Ovary (tissue), 10 donors: ENCODE measurements at regions of chr7 and their contacts with region 1.

Region 1: GRCh38 chr7:150806863-150807262 is 6.3 kb downstream of the TMEM176A start:
- DNase-seq: no peak
- H3K4me3 ChIP-seq: no peak overlapping the region
- H3K27ac ChIP-seq: no peak overlapping the region
- H3K4me1 ChIP-seq: no peaks in the 10 kb centered on the region
- H3K27me3 ChIP-seq: no peaks in the 10 kb centered on the region
- CTCF ChIP-seq: no peak
- EP300 ChIP-seq: no peak
- POLR2A ChIP-seq: no peak

Region 2: GRCh38 chr7:150842036-150842435 is 35.2 kb after region 1 on chr7:
- intact Hi-C with region 1: loop called in 1 of 4 experiments (anchors 1 kb)
- DNase-seq: no peak
- H3K4me3 ChIP-seq: no peak overlapping the region
- H3K27ac ChIP-seq: no peak overlapping the region
- H3K4me1 ChIP-seq: no peaks in the 10 kb centered on the region
- H3K27me3 ChIP-seq: no peaks in the 10 kb centered on the region
- CTCF ChIP-seq: no peak
- EP300 ChIP-seq: no peak
- POLR2A ChIP-seq: no peak

Region 3: GRCh38 chr7:150964593-150965111 is 157.8 kb after region 1 on chr7:
- intact Hi-C with region 1: no loop called
- DNase-seq: no peak
- H3K4me3 ChIP-seq: no peak overlapping the region
- H3K27ac ChIP-seq: no peak overlapping the region
- H3K4me1 ChIP-seq: peaks cover 16% of the 10 kb centered on the region
- H3K27me3 ChIP-seq: no peaks in the 10 kb centered on the region
- CTCF ChIP-seq: no peak
- EP300 ChIP-seq: no peak
- POLR2A ChIP-seq: no peak

Region 4: GRCh38 chr7:151080522-151081169 is 273.8 kb after region 1 on chr7 and contains the start of gene FASTK:
- intact Hi-C with region 1: no loop called
- DNase-seq: peak; percentile 88 to 92 (median 90)
- H3K4me3 ChIP-seq: peak within 1 kb of the TSS; percentile 78
- H3K27ac ChIP-seq: peak within 1 kb of the TSS; percentile 85 to 88
- H3K4me1 ChIP-seq: peaks cover 28% of the 10 kb centered on the region
- H3K27me3 ChIP-seq: no peaks in the 10 kb centered on the region
- CTCF ChIP-seq: peak in 1 of 3 donors; percentile 10
- EP300 ChIP-seq: no peak
- POLR2A ChIP-seq: peak; percentile 44
- total RNA-seq, gene FASTK: 58.0 to 93.3 (median 75.8) TPM